ENCODE measurements at regions of chr6 and their contacts with region 1.

Region 1: DNA sequence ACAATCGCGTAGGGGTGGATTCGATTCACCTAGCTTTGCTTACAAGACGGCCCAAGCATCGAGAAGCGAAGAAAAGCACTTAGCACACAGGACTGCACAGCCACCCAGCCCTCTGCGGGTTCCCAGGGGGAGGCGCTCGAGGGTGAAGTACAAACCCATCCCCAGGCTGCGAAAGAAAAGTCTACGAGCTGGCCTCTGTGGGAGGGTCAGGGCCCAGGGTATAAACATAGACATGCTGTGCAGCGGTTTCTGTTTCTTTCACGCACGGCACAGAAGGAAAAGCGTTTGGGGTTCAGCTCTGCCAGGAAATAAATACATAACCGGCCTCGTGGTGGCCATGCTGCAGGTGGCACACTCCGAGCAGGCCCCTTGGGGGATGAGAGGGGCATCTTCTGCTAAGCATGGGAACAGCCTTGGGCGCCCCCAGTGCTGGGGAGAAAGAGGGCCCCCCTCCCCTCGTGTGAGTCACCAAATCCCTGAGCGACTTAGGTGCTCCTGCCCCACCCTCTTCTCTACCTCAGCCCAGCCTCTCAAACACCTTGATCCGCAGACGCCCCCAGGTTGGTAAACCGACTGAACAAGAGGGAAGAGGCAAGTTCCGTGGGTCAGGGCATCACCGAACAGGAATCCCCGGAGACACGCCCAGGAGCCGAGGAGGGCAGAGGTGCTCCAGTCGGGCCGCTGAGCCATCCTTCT is 91.6 kb upstream of the RIPOR2 start:
- DNase-seq: no peak
- H3K4me3 ChIP-seq: no peak overlapping the region
- H3K27ac ChIP-seq: no peak overlapping the region
- H3K4me1 ChIP-seq: peaks cover 17% of the 10 kb centered on the region
- CTCF ChIP-seq: 0 out of 2 replicates have a peak, but pooled peaks have one; percentile 22

Region 2: DNA sequence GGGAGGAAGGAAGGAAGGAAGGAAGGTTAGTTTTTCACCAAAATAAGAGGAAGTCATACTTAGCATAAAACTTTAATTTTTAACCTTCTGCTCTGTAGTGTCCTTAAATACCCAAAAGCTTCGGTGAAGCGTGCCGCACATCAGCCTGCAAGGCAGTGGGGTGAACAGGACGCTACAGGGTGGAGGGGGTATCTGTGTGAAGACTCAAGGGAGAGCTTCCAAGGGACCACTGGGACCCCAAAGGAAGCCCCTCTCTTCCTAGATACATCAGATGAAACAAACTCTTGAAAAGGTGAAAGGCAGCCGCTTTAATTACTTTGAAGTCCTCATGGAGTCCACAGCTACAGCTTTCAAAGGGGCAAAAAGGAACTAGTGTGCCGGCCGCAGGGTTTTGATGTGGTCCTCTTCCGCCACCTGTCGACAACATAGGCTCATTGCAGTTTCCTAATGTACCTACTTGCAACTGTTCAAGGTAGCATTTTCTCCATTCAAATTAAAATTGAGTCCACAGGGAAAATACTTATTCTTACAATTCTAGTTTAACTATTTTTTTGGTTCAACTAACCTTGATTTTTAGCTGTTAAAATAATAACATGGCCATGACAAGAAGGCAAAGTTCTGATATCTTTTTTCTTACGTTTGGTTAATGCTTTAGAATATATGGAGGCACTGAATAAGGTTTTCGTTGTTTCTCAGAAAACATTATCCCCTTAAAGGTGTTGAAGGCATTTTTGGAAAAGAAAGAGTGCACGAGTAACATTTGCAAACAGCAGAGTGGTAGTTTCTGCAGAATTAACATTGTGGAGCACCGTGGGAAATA is 43.4 kb after region 1 on chr6:
- CTCF ChIA-PET with region 1: no interaction called
- POLR2A ChIA-PET with region 1: interaction called, 7 read pairs
- intact Hi-C with region 1: loop called (anchors 2 kb)
- DNase-seq: peak; percentile 90
- H3K4me3 ChIP-seq: peak overlapping the region; percentile 26
- H3K27ac ChIP-seq: peak overlapping the region; percentile 18
- H3K4me1 ChIP-seq: peaks cover 2% of the 10 kb centered on the region
- CTCF ChIP-seq: peak; percentile 99